ENCODE measurements at regions of chr3 and their contacts with region 1.

Region 1: DNA sequence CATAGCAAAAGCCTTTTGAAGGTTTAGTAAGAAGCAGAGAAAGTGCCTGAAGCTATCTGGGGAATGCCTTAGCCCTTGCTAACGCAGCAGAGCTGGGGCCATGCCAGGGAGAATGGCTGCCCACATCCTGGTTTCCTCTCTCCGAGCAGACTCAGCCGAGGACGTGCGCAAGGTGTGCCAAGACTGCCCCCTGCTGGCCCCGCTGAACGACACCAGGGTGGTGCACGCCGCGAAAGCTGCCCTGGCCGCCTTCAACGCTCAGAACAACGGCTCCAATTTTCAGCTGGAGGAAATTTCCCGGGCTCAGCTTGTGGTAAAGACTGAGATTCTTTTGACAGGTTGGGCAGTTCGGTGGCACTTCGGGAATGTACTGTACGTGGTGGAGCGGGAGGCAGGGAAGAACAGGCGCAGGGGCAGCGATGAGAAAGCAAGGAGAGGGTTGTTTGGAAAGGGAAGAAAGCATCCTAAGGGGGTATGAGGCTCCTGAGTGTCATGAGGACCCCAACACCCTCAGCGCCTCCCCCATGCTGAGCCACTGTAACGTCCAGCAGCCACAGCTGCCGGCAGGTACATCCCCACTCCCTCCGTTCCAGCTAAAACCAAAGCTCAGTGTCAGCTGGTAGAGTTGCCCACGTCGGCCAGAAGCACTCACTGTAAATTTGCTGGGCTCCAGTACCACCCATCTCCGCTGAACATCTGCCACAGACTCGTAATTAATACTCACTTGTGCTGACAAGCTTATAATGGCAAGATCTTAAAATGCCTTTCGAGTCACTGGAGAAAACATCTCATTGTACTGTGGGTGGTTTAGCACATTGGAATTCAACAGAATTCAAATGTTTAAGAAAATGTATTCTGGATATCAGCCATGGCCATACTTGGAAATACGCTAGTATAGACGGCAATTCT is 4.4 kb downstream of the AHSG start:
- DNase-seq: peak; percentile 59
- ATAC-seq: peak; percentile 98
- H3K4me3 ChIP-seq: no peak overlapping the region; the same call in 1 of the 2 replicates
- H3K27ac ChIP-seq: no peak overlapping the region
- H3K4me1 ChIP-seq: peaks cover 7% of the 10 kb centered on the region
- H3K27me3 ChIP-seq: peaks cover 2 to 3% of the 10 kb centered on the region in 2 experiments; a peak in 3 of 4 replicates
- CTCF ChIP-seq: peak; percentile 94 to 97 (median 96)
- EP300 ChIP-seq: no peak
- POLR2A ChIP-seq: no peak
- RAD21 ChIP-seq: peak; percentile 77

Region 2: GRCh38 chr3:185983495-185984141 is 633.7 kb before region 1 on chr3:
- CTCF ChIA-PET with region 1: interaction called, 80 read pairs
- POLR2A ChIA-PET with region 1: no interaction called
- RAD21 ChIA-PET with region 1: interaction called, 13 read pairs
- SMC1A ChIA-PET with region 1: interaction called, 9 read pairs
- in situ Hi-C with region 1: no loop called
- intact Hi-C with region 1: no loop called
- DNase-seq: no peak
- ATAC-seq: peak; percentile 96
- H3K4me3 ChIP-seq: no peak overlapping the region
- H3K27ac ChIP-seq: no peak overlapping the region
- H3K4me1 ChIP-seq: no peaks in the 10 kb centered on the region
- H3K27me3 ChIP-seq: no peaks in the 10 kb centered on the region
- CTCF ChIP-seq: peak; percentile 84 to 87 (median 86)
- EP300 ChIP-seq: no peak
- POLR2A ChIP-seq: no peak
- RAD21 ChIP-seq: peak; percentile 99

Region 3: DNA sequence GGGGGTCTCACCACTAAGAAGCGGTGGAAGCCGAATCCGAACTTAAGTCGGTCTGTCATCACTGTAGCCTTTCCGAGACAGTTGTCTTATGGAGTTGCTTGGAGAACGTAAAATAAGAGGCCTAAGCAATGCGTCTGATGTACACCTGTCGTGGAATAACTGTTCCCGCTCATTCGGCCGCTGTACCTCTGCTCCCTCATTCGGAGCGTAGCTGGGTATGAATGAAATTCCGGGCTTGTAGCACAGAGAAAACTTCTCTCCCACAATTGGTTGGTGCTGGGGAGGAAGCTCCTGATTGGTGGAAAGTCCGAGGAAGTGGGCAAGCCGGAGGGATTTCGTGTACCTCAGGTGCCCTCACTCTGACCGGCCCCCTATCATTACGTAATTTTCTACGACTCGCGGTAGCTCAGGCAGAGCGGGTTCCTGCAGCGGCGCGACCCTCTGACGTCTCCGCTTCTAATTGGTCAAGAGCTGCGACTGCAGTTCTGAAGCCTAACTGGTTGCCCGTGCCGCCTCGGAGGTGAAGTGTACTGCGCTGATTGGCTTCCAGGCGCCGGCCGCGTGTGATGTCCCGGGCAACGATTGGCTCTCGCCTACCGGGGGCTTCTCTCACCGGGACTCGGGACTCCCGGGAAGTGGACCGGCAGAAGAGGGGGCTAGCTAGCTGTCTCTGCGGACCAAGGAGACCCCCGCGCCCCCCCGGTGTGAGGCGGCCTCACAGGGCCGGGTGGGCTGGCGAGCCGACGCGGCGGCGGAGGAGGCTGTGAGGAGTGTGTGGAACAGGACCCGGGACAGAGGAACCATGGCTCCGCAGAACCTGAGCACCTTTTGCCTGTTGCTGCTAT is 47.0 kb before region 1 on chr3 and contains the start of gene DNAJB11:
- CTCF ChIA-PET with region 1: interaction called, 19 read pairs
- POLR2A ChIA-PET with region 1: no interaction called
- RAD21 ChIA-PET with region 1: interaction called, 3 read pairs
- SMC1A ChIA-PET with region 1: interaction called, 5 read pairs
- in situ Hi-C with region 1: no loop called
- intact Hi-C with region 1: no loop called
- DNase-seq: peak; percentile 98
- ATAC-seq: peak; percentile 90
- H3K4me3 ChIP-seq: peak within 1 kb of the TSS; percentile 90
- H3K27ac ChIP-seq: peak within 1 kb of the TSS; percentile 85
- H3K4me1 ChIP-seq: peaks cover 10% of the 10 kb centered on the region
- H3K27me3 ChIP-seq: no peaks in the 10 kb centered on the region
- CTCF ChIP-seq: no peak
- EP300 ChIP-seq: no peak
- POLR2A ChIP-seq: peak; percentile 92
- RAD21 ChIP-seq: no peak
- polyA plus RNA-seq, gene DNAJB11: 16.2 to 26.4 TPM

Region 4: DNA sequence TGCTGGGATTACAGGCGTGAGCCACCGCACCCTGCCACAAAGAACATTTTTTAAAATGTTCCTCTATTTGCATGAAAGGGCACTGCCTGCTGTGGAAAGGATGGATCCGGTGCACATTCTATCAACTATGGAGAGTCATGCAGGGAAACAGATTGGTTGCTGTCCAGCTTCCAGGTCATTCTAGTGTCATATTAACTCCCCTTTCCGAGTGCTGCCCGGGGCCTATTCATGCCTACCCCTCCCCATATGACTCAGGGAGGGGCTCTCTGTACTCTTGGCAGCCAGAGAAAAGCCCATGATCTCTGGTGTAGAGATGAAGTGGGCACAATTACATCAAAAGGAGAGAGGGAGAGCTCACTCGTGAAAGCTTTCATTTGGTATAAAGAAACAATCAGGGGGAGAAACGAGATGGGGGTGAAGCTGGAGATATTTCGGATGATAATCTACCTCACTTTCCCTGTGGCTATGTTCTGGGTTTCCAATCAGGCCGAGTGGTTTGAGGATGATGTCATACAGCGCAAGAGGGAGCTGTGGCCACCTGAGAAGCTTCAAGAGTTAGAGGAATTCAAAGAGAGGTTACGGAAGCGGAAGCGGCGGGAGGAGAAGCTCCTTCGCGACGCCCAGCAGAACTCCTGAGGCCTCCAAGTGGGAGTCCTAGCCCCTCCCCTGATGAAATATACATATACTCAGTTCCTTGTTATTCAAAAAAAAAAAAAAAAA is 20.6 kb before region 1 on chr3:
- CTCF ChIA-PET with region 1: interaction called, 25 read pairs
- POLR2A ChIA-PET with region 1: interaction called, 3 read pairs
- RAD21 ChIA-PET with region 1: no interaction called
- SMC1A ChIA-PET with region 1: interaction called, 6 read pairs
- in situ Hi-C with region 1: no loop called
- intact Hi-C with region 1: no loop called
- DNase-seq: no peak
- ATAC-seq: no peak
- H3K4me3 ChIP-seq: no peak overlapping the region
- H3K27ac ChIP-seq: no peak overlapping the region
- H3K4me1 ChIP-seq: no peaks in the 10 kb centered on the region
- H3K27me3 ChIP-seq: peaks cover 0 to 2% of the 10 kb centered on the region in 2 experiments; a peak in 1 of 4 replicates
- CTCF ChIP-seq: no peak
- EP300 ChIP-seq: no peak
- POLR2A ChIP-seq: no peak
- RAD21 ChIP-seq: no peak

Region 5: GRCh38 chr3:186669378-186670084 is 52.2 kb after region 1 on chr3:
- CTCF ChIA-PET with region 1: no interaction called
- POLR2A ChIA-PET with region 1: no interaction called
- RAD21 ChIA-PET with region 1: no interaction called
- SMC1A ChIA-PET with region 1: no interaction called
- in situ Hi-C with region 1: no loop called
- intact Hi-C with region 1: no loop called
- DNase-seq: no peak
- ATAC-seq: no peak
- H3K4me3 ChIP-seq: no peak overlapping the region
- H3K27ac ChIP-seq: no peak overlapping the region
- H3K4me1 ChIP-seq: no peaks in the 10 kb centered on the region
- H3K27me3 ChIP-seq: no peaks in the 10 kb centered on the region; a peak in 1 of 4 replicates
- CTCF ChIP-seq: no peak
- EP300 ChIP-seq: no peak
- POLR2A ChIP-seq: no peak
- RAD21 ChIP-seq: no peak

Region 6: GRCh38 chr3:186751480-186751879 is 134.2 kb after region 1 on chr3:
- CTCF ChIA-PET with region 1: interaction called, 10 read pairs
- POLR2A ChIA-PET with region 1: no interaction called
- RAD21 ChIA-PET with region 1: no interaction called
- SMC1A ChIA-PET with region 1: interaction called, 5 read pairs
- in situ Hi-C with region 1: no loop called
- intact Hi-C with region 1: no loop called
- DNase-seq: no peak
- ATAC-seq: no peak
- H3K4me3 ChIP-seq: no peak overlapping the region
- H3K27ac ChIP-seq: no peak overlapping the region
- H3K4me1 ChIP-seq: no peaks in the 10 kb centered on the region
- H3K27me3 ChIP-seq: no peaks in the 10 kb centered on the region
- CTCF ChIP-seq: no peak
- EP300 ChIP-seq: no peak
- POLR2A ChIP-seq: no peak
- RAD21 ChIP-seq: no peak

Measured in GM12878 (cell line).